HEK293T (cell line): ENCODE measurements at regions of chr11 and their contacts with region 1.

Region 1: DNA sequence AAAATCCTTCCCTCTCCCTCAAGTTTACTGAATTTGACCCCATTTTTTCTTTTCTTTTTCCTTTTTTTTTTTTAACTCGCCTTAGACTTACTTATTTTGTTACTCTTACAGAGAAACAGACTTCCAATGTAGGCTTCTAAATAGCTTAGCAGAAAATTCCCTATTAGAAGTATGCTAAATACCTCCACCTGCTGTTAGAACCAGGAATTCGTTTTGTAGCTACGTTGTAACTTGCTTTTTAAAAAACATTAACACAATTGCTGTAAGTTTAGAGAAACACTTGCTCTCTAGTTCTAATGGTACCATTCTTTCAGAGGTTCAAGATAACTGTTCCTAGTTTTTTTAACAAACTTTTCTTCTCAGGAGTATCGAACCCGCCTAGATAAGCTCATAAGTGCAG is 324.2 kb downstream of the DCDC1 start:
- DNase-seq: peak; percentile 15

Region 2: DNA sequence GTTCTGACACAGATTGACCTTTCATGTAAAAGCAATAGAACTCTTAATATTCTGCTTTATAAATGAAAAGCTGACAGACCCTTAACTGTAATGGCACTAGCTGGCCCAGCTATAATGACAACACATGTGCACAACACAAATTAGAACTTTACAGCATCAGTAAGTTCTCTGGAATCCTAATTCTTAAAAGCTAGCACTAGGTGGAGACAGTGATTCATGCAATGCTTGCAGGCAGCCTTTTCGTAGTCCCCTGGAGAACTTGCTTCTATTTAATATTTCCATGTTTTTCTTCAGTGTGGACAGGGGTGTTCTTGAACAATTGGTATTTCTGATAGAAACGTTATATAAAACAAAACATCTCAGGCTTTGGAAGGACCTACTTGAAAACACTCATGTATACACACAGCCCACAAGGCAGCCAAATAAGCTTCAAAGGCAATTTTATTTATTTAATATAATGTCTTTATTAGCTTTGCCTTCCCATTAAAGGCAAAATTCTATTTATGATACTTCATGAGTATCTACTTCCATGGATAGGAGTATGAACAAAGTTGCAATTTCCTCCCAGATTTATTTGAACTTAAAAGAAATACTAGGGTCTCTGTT is 84.8 kb before region 1 on chr11:
- CTCF ChIA-PET with region 1: interaction called, 19 read pairs
- POLR2A ChIA-PET with region 1: no interaction called
- DNase-seq: peak; percentile 53

Region 3: GRCh38 chr11:31001427-31001826 is 43.9 kb before region 1 on chr11:
- CTCF ChIA-PET with region 1: no interaction called
- POLR2A ChIA-PET with region 1: no interaction called
- DNase-seq: no peak

Region 4: DNA sequence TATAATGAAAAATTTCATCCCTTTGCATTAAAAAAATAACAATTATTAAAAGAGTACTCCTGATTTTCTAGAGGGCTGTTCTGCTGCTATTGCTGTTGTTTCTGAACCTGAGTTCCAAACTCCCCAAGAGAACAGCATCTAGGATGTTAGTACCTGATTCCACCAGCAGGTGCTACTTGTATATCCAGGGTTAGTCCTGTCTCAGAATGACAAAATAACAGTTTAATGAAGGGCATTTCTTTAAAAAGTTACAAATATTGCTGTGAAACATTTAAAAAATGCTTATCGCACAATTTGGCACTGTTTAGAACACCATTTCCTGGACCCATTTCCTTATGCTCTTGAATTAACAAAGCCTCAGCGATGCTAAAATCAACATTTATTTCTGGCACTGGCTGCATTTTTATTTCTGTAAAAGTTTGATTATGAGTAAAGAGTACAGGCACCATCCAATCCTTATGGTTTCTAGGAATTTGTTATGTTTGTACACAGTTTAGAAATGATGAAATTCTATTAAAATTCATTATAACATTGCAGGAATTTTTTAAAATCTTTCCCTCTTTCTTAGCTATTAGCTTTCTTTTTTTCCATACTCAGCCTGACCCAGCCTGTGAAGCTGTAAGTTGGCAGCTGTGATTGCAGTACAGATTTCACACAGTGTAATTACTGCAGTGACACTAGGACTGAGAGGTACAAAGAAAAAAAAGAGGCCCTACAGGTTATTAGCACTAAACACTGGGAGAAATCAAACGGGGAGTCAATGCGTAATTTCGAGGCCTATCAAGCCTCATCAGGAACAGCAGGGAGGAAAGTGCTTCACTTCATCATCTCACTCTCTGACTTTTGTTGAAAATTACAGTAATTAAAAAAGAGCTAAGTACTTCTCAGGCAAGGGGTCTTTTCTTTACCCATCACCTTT is 115.4 kb after region 1 on chr11:
- CTCF ChIA-PET with region 1: no interaction called
- POLR2A ChIA-PET with region 1: no interaction called
- DNase-seq: peak; percentile 20